ENCODE measurements at regions of chr10 and their contacts with region 1.

Region 1: GRCh38 chr10:58189269-58189668 is 78.4 kb downstream of the IPMK start:
- DNase-seq: peak in 3 of 5 donors; percentile 14 to 43 (median 42)
- H3K4me3 ChIP-seq: no peak overlapping the region
- H3K27ac ChIP-seq: no peak overlapping the region
- H3K4me1 ChIP-seq: no peaks in the 10 kb centered on the region
- H3K27me3 ChIP-seq: no peaks in the 10 kb centered on the region
- CTCF ChIP-seq: no peak

Region 2: DNA sequence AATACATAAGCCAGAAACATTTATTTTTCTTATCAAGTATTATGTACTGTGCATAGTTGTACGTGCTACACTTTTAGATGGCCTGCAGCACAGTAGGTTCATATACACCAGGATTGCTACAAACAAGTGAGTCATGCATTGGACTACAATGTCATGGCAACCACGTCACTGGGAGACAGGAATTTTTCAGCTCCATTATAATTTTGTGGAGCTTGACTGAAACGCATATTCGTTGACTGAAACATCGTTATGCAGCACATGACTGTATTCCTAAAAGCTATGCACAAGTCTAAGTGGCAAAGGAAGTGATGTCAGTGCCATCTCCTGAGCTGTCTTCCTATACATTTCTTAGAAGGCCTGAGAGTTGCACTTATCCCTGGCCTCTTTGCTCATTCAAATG is 793.3 kb before region 1 on chr10:
- intact Hi-C with region 1: no loop called
- DNase-seq: no peak
- H3K4me3 ChIP-seq: no peak overlapping the region
- H3K27ac ChIP-seq: no peak overlapping the region
- H3K4me1 ChIP-seq: no peaks in the 10 kb centered on the region
- H3K27me3 ChIP-seq: no peaks in the 10 kb centered on the region
- CTCF ChIP-seq: no peak

Region 3: GRCh38 chr10:58282615-58283014 is 93.3 kb after region 1 on chr10:
- intact Hi-C with region 1: loop called (anchors 10 kb)
- DNase-seq: peak in 1 of 5 donors; percentile 7
- H3K4me3 ChIP-seq: no peak overlapping the region
- H3K27ac ChIP-seq: no peak overlapping the region
- H3K4me1 ChIP-seq: no peaks in the 10 kb centered on the region
- H3K27me3 ChIP-seq: no peaks in the 10 kb centered on the region
- CTCF ChIP-seq: no peak